ENCODE measurements at regions of chr7 and their contacts with region 1.

Region 1: GRCh38 chr7:118153551-118154177 is 30.3 kb upstream of the LSM8 start:
- DNase-seq: peak; percentile 74
- H3K4me3 Mint-ChIP-seq: no peak overlapping the region
- H3K27ac Mint-ChIP-seq: no peak overlapping the region
- H3K4me1 Mint-ChIP-seq: no peaks in the 10 kb centered on the region
- H3K27me3 Mint-ChIP-seq: peaks cover 13% of the 10 kb centered on the region

Region 2: DNA sequence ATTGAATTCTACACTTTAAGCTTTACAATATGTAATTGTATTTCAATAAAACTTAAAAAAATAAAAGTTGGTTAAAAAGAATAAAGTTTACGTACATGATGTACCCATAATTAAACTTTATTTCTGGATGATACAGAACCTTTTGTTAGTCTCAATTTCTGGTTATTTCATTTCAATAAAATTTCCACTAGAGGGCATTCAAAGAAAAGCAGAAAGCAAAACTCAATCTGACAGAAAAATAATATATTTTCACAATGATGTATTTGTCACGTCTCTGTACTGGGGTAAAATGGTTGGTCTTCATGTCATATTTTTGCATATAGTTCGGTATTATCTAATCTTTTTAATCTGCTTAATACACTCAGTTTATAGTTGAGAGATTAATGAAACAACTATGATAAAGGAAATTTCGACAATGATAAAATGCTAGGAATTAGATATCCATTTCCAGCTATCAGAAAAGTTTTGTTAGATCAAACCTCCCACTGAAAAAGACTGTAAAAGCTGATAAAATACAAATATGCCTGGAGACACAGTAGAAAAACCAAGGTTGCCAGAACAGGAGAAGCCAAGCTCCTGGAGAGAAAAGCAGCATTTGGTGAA is 753.7 kb before region 1 on chr7:
- intact Hi-C with region 1: loop called (anchors 5 kb)
- DNase-seq: no peak
- H3K4me3 Mint-ChIP-seq: no peak overlapping the region
- H3K27ac Mint-ChIP-seq: no peak overlapping the region
- H3K4me1 Mint-ChIP-seq: no peaks in the 10 kb centered on the region
- H3K27me3 Mint-ChIP-seq: no peaks in the 10 kb centered on the region

Region 3: GRCh38 chr7:117458977-117459583 is 694.6 kb before region 1 on chr7:
- intact Hi-C with region 1: loop called (anchors 1 kb)
- DNase-seq: no peak
- H3K4me3 Mint-ChIP-seq: no peak overlapping the region
- H3K27ac Mint-ChIP-seq: no peak overlapping the region
- H3K4me1 Mint-ChIP-seq: no peaks in the 10 kb centered on the region
- H3K27me3 Mint-ChIP-seq: no peaks in the 10 kb centered on the region

Region 4: GRCh38 chr7:117750612-117751563 is 402.8 kb before region 1 on chr7:
- intact Hi-C with region 1: loop called (anchors 2 kb)
- DNase-seq: no peak
- H3K4me3 Mint-ChIP-seq: no peak overlapping the region
- H3K27ac Mint-ChIP-seq: no peak overlapping the region
- H3K4me1 Mint-ChIP-seq: no peaks in the 10 kb centered on the region
- H3K27me3 Mint-ChIP-seq: peaks cover 4% of the 10 kb centered on the region

Measured in activated CD4-positive, alpha-beta T cell treated with anti-CD3 and anti-CD28 coated beads, Interleukin-2, amount 10 ng/mL, durations not matched to agents 24 days and 14 days (primary cell).